Keratinocyte (primary cell): ENCODE measurements at regions of chr16 and their contacts with region 1.

Region 1: GRCh38 chr16:30775392-30776188 is 11.4 kb downstream of the ZNF629 start:
- DNase-seq: no peak
- H3K4me3 ChIP-seq: peak overlapping the region; percentile 55 to 78 (median 75)
- H3K27ac ChIP-seq: peak overlapping the region; percentile 76
- H3K4me1 ChIP-seq: peaks cover 9% of the 10 kb centered on the region
- H3K27me3 ChIP-seq: no peaks in the 10 kb centered on the region
- CTCF ChIP-seq: no peak

Region 2: DNA sequence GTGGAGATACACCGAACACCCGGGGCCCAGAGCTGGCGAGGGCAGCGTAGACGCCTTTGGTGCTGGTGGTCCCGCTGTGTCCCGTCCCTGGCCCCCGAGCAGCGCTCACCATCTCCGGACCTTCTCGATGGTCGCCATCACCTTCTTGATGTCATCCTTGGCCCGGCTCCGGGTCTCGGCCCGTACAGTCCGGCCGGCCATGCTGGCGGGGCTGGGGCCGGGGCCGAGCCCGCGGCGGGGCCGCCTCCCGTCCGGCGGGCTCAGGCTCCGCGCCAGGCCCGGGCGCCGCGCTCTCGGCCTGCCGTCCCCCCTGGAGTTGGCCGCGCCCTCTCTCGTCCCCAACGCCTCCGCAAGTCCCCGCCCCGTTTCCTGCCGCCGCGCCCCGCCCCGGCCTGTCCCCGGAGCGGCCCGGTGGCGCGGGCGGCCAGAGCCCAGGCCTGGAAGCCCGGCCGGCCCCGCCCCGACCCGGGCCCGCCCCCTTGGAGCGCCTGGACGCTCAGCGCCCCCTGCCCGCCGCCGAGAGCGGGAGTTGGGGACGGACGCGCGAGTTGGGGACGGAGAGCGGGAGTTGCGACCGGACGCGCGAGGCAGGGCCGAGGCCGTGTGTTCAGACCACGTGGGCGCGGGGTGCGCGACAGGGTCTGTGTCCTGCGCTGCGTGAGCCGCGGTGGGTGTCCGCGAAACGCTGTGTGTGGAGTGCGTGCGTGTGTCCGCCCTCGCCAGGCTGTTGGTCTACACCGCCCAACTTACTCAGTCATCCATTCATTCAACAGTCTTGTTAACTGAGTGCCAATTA is 118.4 kb after region 1 on chr16 and contains the start of gene BCL7C:
- dilution Hi-C with region 1: loop called (anchors 25 kb)
- DNase-seq: peak; percentile 42
- H3K4me3 ChIP-seq: peak within 1 kb of the TSS; percentile 74 to 85 (median 80)
- H3K27ac ChIP-seq: peak within 1 kb of the TSS; percentile 93
- H3K4me1 ChIP-seq: peaks cover 35% of the 10 kb centered on the region
- H3K27me3 ChIP-seq: no peaks in the 10 kb centered on the region
- CTCF ChIP-seq: peak in 2 of 3 experiments; percentile 39 to 69
- polyA plus RNA-seq, gene BCL7C: 18.5 to 22.4 TPM (median 19.2 TPM) in 3 replicates